Mammary epithelial cell (primary cell): ENCODE measurements at regions of chr3 and their contacts with region 1.

Region 1: GRCh38 chr3:197599089-197599765 is 43.5 kb upstream of the BDH1 start:
- DNase-seq: peak; percentile 50
- H3K4me3 ChIP-seq: peak overlapping the region in 2 of 3 experiments; percentile 13 to 18
- H3K27ac ChIP-seq: peak overlapping the region; percentile 3
- H3K4me1 ChIP-seq: peaks cover 11% of the 10 kb centered on the region
- H3K27me3 ChIP-seq: no peaks in the 10 kb centered on the region
- CTCF ChIP-seq: peak; percentile 85 to 86

Region 2: GRCh38 chr3:197523556-197523955 is 75.7 kb before region 1 on chr3:
- CTCF ChIA-PET with region 1: no interaction called
- dilution Hi-C with region 1: no loop called
- in situ Hi-C with region 1: no loop called
- intact Hi-C with region 1: no loop called
- DNase-seq: no peak
- H3K4me3 ChIP-seq: no peak overlapping the region
- H3K27ac ChIP-seq: no peak overlapping the region
- H3K4me1 ChIP-seq: no peaks in the 10 kb centered on the region
- H3K27me3 ChIP-seq: no peaks in the 10 kb centered on the region
- CTCF ChIP-seq: no peak

Region 3: GRCh38 chr3:197533927-197534340 is 65.3 kb before region 1 on chr3:
- CTCF ChIA-PET with region 1: no interaction called
- dilution Hi-C with region 1: loop called (anchors 5 kb)
- in situ Hi-C with region 1: no loop called
- intact Hi-C with region 1: no loop called
- DNase-seq: peak; percentile 69
- H3K4me3 ChIP-seq: no peak overlapping the region
- H3K27ac ChIP-seq: peak overlapping the region; percentile 46
- H3K4me1 ChIP-seq: peaks cover 20% of the 10 kb centered on the region
- H3K27me3 ChIP-seq: no peaks in the 10 kb centered on the region
- CTCF ChIP-seq: no peak

Region 4: GRCh38 chr3:197801891-197802778 is 202.9 kb after region 1 on chr3:
- CTCF ChIA-PET with region 1: no interaction called
- dilution Hi-C with region 1: no loop called
- in situ Hi-C with region 1: no loop called
- intact Hi-C with region 1: loop called (anchors 1 kb)
- DNase-seq: peak; percentile 60
- H3K4me3 ChIP-seq: no peak overlapping the region
- H3K27ac ChIP-seq: peak overlapping the region; percentile 13
- H3K4me1 ChIP-seq: peaks cover 11% of the 10 kb centered on the region
- H3K27me3 ChIP-seq: no peaks in the 10 kb centered on the region
- CTCF ChIP-seq: peak; percentile 43 to 58

Region 5: DNA sequence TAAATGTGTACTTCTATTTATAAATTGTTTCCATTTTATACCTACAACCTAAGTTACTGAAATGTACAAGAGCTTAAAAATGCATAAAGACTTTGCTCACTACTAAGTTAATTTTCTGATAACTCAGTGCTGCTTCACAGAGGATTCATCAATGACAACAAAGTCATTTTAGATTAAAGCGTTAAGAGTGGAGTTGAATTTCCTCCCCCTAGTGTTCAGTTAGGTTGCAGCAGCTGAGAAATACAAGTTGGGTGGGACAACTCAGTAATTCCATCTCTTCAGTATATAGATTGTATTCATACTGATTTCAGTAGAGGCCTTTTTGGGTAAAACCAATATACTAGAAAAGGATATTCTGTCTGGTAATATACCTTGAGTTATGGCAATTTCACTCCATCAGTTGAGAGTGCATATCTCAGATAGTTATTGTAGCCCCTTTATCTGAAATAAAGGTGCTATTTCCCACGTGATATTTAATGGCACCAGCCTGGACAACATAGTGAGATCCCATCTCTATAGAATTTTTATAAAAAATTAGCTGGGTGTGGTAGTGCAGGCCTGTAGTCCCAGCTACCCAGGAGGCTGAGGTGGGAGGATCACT is 343.8 kb after region 1 on chr3:
- CTCF ChIA-PET with region 1: no interaction called
- dilution Hi-C with region 1: no loop called
- in situ Hi-C with region 1: no loop called
- intact Hi-C with region 1: loop called (anchors 2 kb)
- DNase-seq: peak; percentile 35
- H3K4me3 ChIP-seq: no peak overlapping the region
- H3K27ac ChIP-seq: no peak overlapping the region
- H3K4me1 ChIP-seq: no peaks in the 10 kb centered on the region
- H3K27me3 ChIP-seq: no peaks in the 10 kb centered on the region
- CTCF ChIP-seq: peak; percentile 81 to 86